MCF 10A (cell line): ENCODE measurements at regions of chr9 and their contacts with region 1.

Region 1: GRCh38 chr9:78439190-78439865 is 142.4 kb downstream of the PSAT1 start:
- DNase-seq: peak; percentile 83
- H3K4me3 Mint-ChIP-seq: no peak overlapping the region
- H3K27ac Mint-ChIP-seq: no peak overlapping the region
- H3K4me1 Mint-ChIP-seq: no peaks in the 10 kb centered on the region
- H3K27me3 Mint-ChIP-seq: peaks cover 13% of the 10 kb centered on the region
- CTCF ChIP-seq: peak; percentile 93

Region 2: GRCh38 chr9:78428640-78429039 is 10.7 kb before region 1 on chr9:
- CTCF ChIA-PET with region 1: interaction called, 15 read pairs
- POLR2A ChIA-PET with region 1: no interaction called
- intact Hi-C with region 1: no loop called
- DNase-seq: no peak
- H3K4me3 Mint-ChIP-seq: no peak overlapping the region
- H3K27ac Mint-ChIP-seq: no peak overlapping the region
- H3K4me1 Mint-ChIP-seq: no peaks in the 10 kb centered on the region
- H3K27me3 Mint-ChIP-seq: no peaks in the 10 kb centered on the region
- CTCF ChIP-seq: no peak

Region 3: DNA sequence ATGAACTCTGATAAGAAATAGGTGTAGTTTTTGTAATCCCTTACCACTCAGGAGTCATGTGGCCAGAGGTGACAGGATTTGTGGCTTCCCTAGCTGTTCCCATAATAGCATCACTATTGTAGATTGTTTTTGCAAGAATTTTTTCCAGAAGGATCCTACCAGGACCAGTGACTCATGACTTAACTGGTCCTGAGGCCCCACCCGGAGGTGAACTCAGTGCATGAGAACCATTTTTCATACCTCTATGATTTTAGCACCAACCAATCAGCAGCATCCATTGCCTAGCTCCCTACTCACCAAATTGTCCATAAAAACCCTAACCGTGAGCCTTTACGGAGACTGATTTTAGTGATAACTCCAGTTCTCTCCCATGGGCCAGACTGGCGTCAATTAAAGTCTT is 342.4 kb after region 1 on chr9:
- CTCF ChIA-PET with region 1: no interaction called
- POLR2A ChIA-PET with region 1: no interaction called
- intact Hi-C with region 1: loop called (anchors 1 kb)
- DNase-seq: peak; percentile 13
- H3K4me3 Mint-ChIP-seq: no peak overlapping the region
- H3K27ac Mint-ChIP-seq: no peak overlapping the region
- H3K4me1 Mint-ChIP-seq: no peaks in the 10 kb centered on the region
- H3K27me3 Mint-ChIP-seq: no peaks in the 10 kb centered on the region
- CTCF ChIP-seq: no peak